H1 (cell line): ENCODE measurements at regions of chr12 and their contacts with region 1.

Region 1: GRCh38 chr12:52221912-52222457 is 11.1 kb upstream of the KRT7 start:
- DNase-seq: peak; percentile 44 to 96
- H3K4me3 ChIP-seq: no peak overlapping the region
- H3K27ac ChIP-seq: no peak overlapping the region
- H3K4me1 ChIP-seq: peaks cover 0 to 2% (median under 1%) of the 10 kb centered on the region in 4 experiments; a peak in 2 of 7 replicates
- H3K27me3 ChIP-seq: no peaks in the 10 kb centered on the region; a peak in 2 of 7 replicates
- CTCF ChIP-seq: peak; percentile 93 to 98 (median 95)
- EP300 ChIP-seq: no peak
- POLR2A ChIP-seq: no peak
- RAD21 ChIP-seq: peak; percentile 72 to 84

Region 2: GRCh38 chr12:52056801-52057637 is 165.0 kb before region 1 on chr12:
- CTCF ChIA-PET with region 1: no interaction called
- POLR2A ChIA-PET with region 1: no interaction called
- DNase-seq: no peak
- H3K4me3 ChIP-seq: no peak overlapping the region
- H3K27ac ChIP-seq: no peak overlapping the region
- H3K4me1 ChIP-seq: peaks cover 0 to 4% (median under 1%) of the 10 kb centered on the region in 4 experiments; a peak in 3 of 7 replicates
- H3K27me3 ChIP-seq: peaks cover 0 to 11% (median 6%) of the 10 kb centered on the region in 4 experiments; a peak in 4 of 7 replicates
- CTCF ChIP-seq: no peak
- EP300 ChIP-seq: no peak
- POLR2A ChIP-seq: no peak
- RAD21 ChIP-seq: no peak

Region 3: DNA sequence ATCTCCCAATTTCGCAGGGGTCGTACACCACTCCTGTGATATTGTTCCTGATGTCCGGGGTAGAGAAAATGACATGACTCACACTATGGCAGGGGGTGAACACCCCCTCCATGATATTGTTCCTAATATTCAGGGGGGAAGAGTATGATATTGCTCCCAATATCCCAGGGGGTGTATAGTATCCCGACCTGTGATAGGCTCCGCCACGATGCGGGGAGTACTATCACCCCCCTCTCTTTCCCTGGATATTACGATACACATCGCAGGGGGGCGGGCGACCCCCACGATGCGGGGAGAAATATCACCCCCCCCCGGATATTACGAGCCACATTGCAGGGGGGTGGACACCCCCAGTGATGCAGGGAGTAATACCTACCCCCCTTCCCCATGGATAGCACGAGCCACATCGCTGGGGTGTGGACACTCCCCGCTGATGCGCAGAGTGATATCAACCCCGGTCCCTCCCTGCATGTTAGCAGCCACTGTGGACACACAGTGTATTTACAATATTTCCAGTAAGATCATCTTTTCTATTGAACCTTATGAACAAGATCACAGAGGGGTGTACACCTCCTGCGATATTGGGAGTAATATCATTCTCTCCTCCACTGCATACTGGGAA is 124.8 kb before region 1 on chr12:
- CTCF ChIA-PET with region 1: no interaction called
- POLR2A ChIA-PET with region 1: no interaction called
- DNase-seq: no peak
- H3K4me3 ChIP-seq: no peak overlapping the region
- H3K27ac ChIP-seq: no peak overlapping the region
- H3K4me1 ChIP-seq: no peaks in the 10 kb centered on the region
- H3K27me3 ChIP-seq: no peaks in the 10 kb centered on the region
- CTCF ChIP-seq: no peak
- EP300 ChIP-seq: no peak
- POLR2A ChIP-seq: no peak
- RAD21 ChIP-seq: no peak

Region 4: GRCh38 chr12:52119398-52120254 is 102.4 kb before region 1 on chr12:
- CTCF ChIA-PET with region 1: no interaction called
- POLR2A ChIA-PET with region 1: no interaction called
- DNase-seq: peak; percentile 65 to 88
- H3K4me3 ChIP-seq: peak overlapping the region in 1 of 4 experiments; percentile 38; a peak in 1 of 8 replicates
- H3K27ac ChIP-seq: no peak overlapping the region
- H3K4me1 ChIP-seq: peaks cover 15 to 25% (median 16%) of the 10 kb centered on the region in 4 experiments
- H3K27me3 ChIP-seq: no peaks in the 10 kb centered on the region
- CTCF ChIP-seq: peak; percentile 85 to 90 (median 89)
- EP300 ChIP-seq: no peak
- POLR2A ChIP-seq: no peak
- RAD21 ChIP-seq: peak; percentile 48 to 58

Region 5: GRCh38 chr12:52156736-52157565 is 65.0 kb before region 1 on chr12:
- CTCF ChIA-PET with region 1: interaction called, 29 read pairs
- POLR2A ChIA-PET with region 1: no interaction called
- DNase-seq: peak in 1 of 2 experiments; percentile 98
- H3K4me3 ChIP-seq: no peak overlapping the region
- H3K27ac ChIP-seq: no peak overlapping the region
- H3K4me1 ChIP-seq: 0 out of 7 replicates have a peak, but pooled peaks cover 0 to 2% (median under 1%) of the 10 kb centered on the region in 4 experiments
- H3K27me3 ChIP-seq: peaks cover 0 to 4% (median 2%) of the 10 kb centered on the region in 4 experiments; a peak in 2 of 7 replicates
- CTCF ChIP-seq: peak in 2 of 3 experiments; percentile 98; a peak in 3 of 4 replicates
- EP300 ChIP-seq: no peak
- POLR2A ChIP-seq: no peak
- RAD21 ChIP-seq: peak; percentile 100

Region 6: GRCh38 chr12:52202361-52203074 is 19.5 kb before region 1 on chr12:
- CTCF ChIA-PET with region 1: interaction called, 80 read pairs
- POLR2A ChIA-PET with region 1: no interaction called
- DNase-seq: no peak
- H3K4me3 ChIP-seq: no peak overlapping the region
- H3K27ac ChIP-seq: no peak overlapping the region
- H3K4me1 ChIP-seq: peaks cover 0 to 22% (median 6%) of the 10 kb centered on the region in 4 experiments; a peak in 4 of 7 replicates
- H3K27me3 ChIP-seq: no peaks in the 10 kb centered on the region
- CTCF ChIP-seq: no peak
- EP300 ChIP-seq: no peak
- POLR2A ChIP-seq: no peak
- RAD21 ChIP-seq: no peak

Region 7: GRCh38 chr12:52258335-52258901 is 36.4 kb after region 1 on chr12:
- CTCF ChIA-PET with region 1: interaction called, 146 read pairs
- POLR2A ChIA-PET with region 1: no interaction called
- DNase-seq: peak in 1 of 2 experiments; percentile 75
- H3K4me3 ChIP-seq: peak overlapping the region in 3 of 4 experiments; percentile 7 to 44 (median 26); a peak in 4 of 8 replicates
- H3K27ac ChIP-seq: no peak overlapping the region
- H3K4me1 ChIP-seq: peaks cover 0 to 6% (median under 1%) of the 10 kb centered on the region in 4 experiments; a peak in 3 of 7 replicates
- H3K27me3 ChIP-seq: peaks cover 14 to 44% (median 37%) of the 10 kb centered on the region in 4 experiments
- CTCF ChIP-seq: peak in 1 of 3 experiments; percentile 6; a peak in 1 of 4 replicates
- EP300 ChIP-seq: no peak
- POLR2A ChIP-seq: no peak
- RAD21 ChIP-seq: no peak

Region 8: GRCh38 chr12:52307836-52308805 is 86.1 kb after region 1 on chr12:
- CTCF ChIA-PET with region 1: interaction called, 63 read pairs
- POLR2A ChIA-PET with region 1: interaction called, 3 read pairs
- DNase-seq: peak; percentile 23 to 83
- H3K4me3 ChIP-seq: peak overlapping the region; percentile 39 to 67 (median 61)
- H3K27ac ChIP-seq: no peak overlapping the region
- H3K4me1 ChIP-seq: peaks cover 0 to 4% (median 0%) of the 10 kb centered on the region in 4 experiments; a peak in 1 of 7 replicates
- H3K27me3 ChIP-seq: peaks cover 21 to 47% (median 36%) of the 10 kb centered on the region in 4 experiments
- CTCF ChIP-seq: peak in 2 of 3 experiments; percentile 14 to 24; a peak in 2 of 4 replicates
- EP300 ChIP-seq: no peak
- POLR2A ChIP-seq: no peak
- RAD21 ChIP-seq: peak in 1 of 2 experiments; percentile 15; a peak in 1 of 4 replicates

Region 9: GRCh38 chr12:52327052-52327829 is 105.3 kb after region 1 on chr12:
- CTCF ChIA-PET with region 1: interaction called, 82 read pairs
- POLR2A ChIA-PET with region 1: no interaction called
- DNase-seq: peak; percentile 67 to 75
- H3K4me3 ChIP-seq: no peak overlapping the region
- H3K27ac ChIP-seq: no peak overlapping the region
- H3K4me1 ChIP-seq: no peaks in the 10 kb centered on the region
- H3K27me3 ChIP-seq: no peaks in the 10 kb centered on the region
- CTCF ChIP-seq: peak; percentile 97 to 100 (median 100)
- EP300 ChIP-seq: no peak
- POLR2A ChIP-seq: no peak
- RAD21 ChIP-seq: peak; percentile 81 to 88

Region 10: GRCh38 chr12:52486166-52487105 is 264.5 kb after region 1 on chr12:
- CTCF ChIA-PET with region 1: no interaction called
- POLR2A ChIA-PET with region 1: no interaction called
- DNase-seq: no peak
- H3K4me3 ChIP-seq: no peak overlapping the region
- H3K27ac ChIP-seq: no peak overlapping the region
- H3K4me1 ChIP-seq: no peaks in the 10 kb centered on the region
- H3K27me3 ChIP-seq: no peaks in the 10 kb centered on the region
- CTCF ChIP-seq: no peak
- EP300 ChIP-seq: no peak
- POLR2A ChIP-seq: no peak
- RAD21 ChIP-seq: no peak